ENCODE measurements at regions of chr1 and their contacts with region 1.

Region 1: GRCh38 chr1:11907275-11908094 is 18.7 kb downstream of the KIAA2013 start:
- DNase-seq: peak; percentile 94
- ATAC-seq: peak; percentile 47
- H3K4me3 Mint-ChIP-seq: peak overlapping the region; percentile 81
- H3K27ac Mint-ChIP-seq: peak overlapping the region; percentile 100
- H3K4me1 Mint-ChIP-seq: peaks cover 56% of the 10 kb centered on the region
- H3K27me3 Mint-ChIP-seq: peaks cover 5% of the 10 kb centered on the region

Region 2: DNA sequence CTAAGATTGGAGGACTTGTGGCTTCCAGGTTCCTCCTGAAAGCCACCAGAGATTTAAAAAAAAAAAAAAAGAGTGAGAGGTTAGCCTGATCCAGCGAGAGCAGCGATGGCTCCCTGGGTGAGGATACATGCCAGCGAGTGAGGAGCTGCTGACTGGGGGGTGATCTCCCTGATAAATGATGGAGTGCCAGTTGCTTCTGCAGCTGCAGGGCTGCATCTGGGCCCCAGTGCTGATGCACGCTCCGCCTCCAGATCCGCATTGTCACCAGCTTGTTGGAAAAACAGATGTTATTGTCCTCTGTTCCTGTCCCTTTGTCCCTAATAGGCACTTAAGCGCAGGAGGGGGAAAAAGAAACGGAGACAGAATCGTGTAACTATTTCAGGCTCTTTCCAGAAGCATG is 605.9 kb before region 1 on chr1:
- CTCF ChIA-PET with region 1: no interaction called
- POLR2A ChIA-PET with region 1: no interaction called
- DNase-seq: no peak
- ATAC-seq: no peak
- H3K4me3 Mint-ChIP-seq: no peak overlapping the region
- H3K27ac Mint-ChIP-seq: no peak overlapping the region
- H3K4me1 Mint-ChIP-seq: peaks cover 9% of the 10 kb centered on the region
- H3K27me3 Mint-ChIP-seq: no peaks in the 10 kb centered on the region

Region 3: DNA sequence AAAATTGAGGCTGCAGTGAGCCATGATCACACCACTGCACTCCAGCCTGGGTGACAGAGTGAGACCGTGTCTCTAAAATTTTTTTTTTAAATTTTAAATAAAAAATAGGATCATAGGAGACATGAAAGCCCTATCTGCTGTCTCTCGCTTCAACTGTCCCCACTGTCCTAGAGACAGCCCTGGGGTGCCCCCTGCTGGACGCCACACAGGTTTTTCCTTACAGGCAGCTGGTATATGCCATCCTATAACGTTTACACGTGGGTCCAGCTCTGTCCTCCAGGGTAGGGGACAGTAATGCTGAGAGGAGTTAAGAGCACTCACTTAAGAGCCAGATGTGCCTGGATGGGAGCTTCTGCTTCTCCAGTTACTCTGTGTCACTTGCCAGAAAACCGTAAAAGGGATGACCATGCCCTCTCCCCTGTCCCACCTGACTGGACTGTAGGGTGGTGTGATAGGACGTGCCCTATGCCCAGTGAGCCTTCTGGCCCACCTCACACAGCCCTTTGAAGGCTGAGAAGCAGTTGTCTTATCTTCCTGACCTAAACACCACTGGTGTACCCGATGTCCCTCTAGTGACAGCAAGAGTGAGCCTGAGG is 261.7 kb before region 1 on chr1:
- CTCF ChIA-PET with region 1: no interaction called
- POLR2A ChIA-PET with region 1: interaction called, 14 read pairs
- DNase-seq: peak; percentile 91
- ATAC-seq: peak; percentile 55
- H3K4me3 Mint-ChIP-seq: no peak overlapping the region
- H3K27ac Mint-ChIP-seq: no peak overlapping the region
- H3K4me1 Mint-ChIP-seq: peaks cover 16% of the 10 kb centered on the region
- H3K27me3 Mint-ChIP-seq: peaks cover 2% of the 10 kb centered on the region

Region 4: DNA sequence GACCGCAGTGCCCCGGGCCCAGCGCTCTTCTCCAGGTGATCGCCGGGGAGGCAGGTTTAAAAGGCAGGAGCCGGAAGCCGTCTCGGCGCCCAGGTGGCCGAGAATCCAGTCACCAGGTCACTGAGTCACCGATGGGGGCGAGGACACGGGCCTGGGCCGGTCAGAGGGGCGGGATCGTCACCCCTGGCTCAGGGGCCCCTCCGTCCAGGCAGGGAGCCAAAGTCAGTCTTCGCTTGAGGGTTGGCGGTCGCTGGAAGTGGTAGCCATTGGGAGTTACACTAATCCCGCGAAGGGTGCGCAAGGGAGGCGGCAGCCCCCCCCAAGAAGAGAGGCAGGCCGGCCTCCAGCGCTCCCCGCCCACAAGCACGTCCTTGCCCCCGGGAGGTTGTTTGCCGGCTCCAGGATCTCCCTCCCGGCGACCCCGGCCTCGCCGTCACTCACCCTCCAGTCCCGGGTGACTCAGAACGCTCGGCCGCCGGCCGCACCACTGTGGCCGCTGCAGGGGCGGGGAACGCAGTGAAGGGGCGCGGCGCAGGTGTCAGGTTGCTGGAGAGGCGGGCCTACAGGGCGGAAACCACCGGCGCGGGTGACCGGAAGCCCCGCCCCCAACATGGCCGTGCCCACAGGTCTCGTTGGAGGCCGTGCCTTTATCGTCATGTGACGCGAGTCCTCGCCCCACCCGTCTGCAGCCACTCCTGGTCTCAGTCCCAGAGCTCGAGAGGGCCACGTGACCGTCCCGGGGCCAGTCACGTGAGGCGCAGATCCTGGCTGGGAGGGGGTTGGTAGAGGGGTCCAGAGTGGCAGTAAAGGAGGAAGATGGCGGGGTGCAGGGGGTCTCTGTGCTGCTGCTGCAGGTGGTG is 101.8 kb before region 1 on chr1 and contains the starts of genes CLCN6 and MTHFR:
- CTCF ChIA-PET with region 1: interaction called, 7 read pairs
- POLR2A ChIA-PET with region 1: interaction called, 103 read pairs
- DNase-seq: peak; percentile 99
- ATAC-seq: peak; percentile 88
- H3K4me3 Mint-ChIP-seq: peak within 1 kb of the TSS; percentile 97
- H3K27ac Mint-ChIP-seq: peak within 1 kb of the TSS; percentile 95
- H3K4me1 Mint-ChIP-seq: peaks cover 64% of the 10 kb centered on the region
- H3K27me3 Mint-ChIP-seq: no peaks in the 10 kb centered on the region
- total RNA-seq, gene CLCN6: 19.7 to 20.9 TPM
- total RNA-seq, gene MTHFR: 32.4 to 34.6 TPM

Region 5: DNA sequence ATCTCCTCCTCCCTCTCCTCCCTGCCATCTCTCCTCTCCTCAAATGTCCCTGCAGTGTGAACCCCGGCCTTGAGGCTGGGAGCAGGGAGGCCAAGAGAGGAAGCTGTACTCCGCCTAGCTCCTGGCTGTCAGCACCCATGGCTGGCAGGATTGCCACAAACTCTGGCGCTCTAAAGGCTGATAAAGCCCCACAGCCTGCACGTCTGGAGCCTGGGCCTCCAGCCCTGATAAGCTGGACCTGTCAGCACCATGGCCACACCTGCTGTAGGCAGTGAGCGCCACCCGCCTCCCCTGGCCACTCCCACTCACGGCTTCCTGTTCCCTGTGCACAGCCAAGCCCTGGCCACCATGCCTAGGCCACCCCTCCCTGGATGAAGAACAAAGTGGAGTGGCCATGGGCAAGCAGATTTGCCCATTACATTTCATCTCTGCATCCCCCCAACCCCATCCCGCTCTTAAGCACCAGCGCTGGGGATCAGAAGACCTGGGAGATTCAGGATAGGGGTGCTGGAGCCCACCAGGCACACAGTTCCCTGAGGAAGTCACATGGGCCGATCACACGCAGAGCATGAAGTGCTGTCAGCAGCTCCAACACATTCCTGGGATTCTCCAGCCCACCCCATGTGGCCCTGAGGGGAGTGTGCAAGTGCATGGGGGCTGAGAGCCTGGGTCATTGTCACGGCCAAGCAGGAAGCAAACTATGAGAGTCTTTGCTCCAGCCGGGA is 24.5 kb before region 1 on chr1:
- CTCF ChIA-PET with region 1: no interaction called
- POLR2A ChIA-PET with region 1: interaction called, 16 read pairs
- DNase-seq: peak; percentile 30
- ATAC-seq: peak; percentile 61
- H3K4me3 Mint-ChIP-seq: no peak overlapping the region
- H3K27ac Mint-ChIP-seq: no peak overlapping the region
- H3K4me1 Mint-ChIP-seq: peaks cover 5% of the 10 kb centered on the region
- H3K27me3 Mint-ChIP-seq: peaks cover 4% of the 10 kb centered on the region

Region 6: GRCh38 chr1:11967028-11967547 is 59.6 kb after region 1 on chr1:
- CTCF ChIA-PET with region 1: no interaction called
- POLR2A ChIA-PET with region 1: interaction called, 138 read pairs
- DNase-seq: peak; percentile 27
- ATAC-seq: no peak
- H3K4me3 Mint-ChIP-seq: no peak overlapping the region
- H3K27ac Mint-ChIP-seq: no peak overlapping the region
- H3K4me1 Mint-ChIP-seq: peaks cover 7% of the 10 kb centered on the region
- H3K27me3 Mint-ChIP-seq: no peaks in the 10 kb centered on the region

Region 7: DNA sequence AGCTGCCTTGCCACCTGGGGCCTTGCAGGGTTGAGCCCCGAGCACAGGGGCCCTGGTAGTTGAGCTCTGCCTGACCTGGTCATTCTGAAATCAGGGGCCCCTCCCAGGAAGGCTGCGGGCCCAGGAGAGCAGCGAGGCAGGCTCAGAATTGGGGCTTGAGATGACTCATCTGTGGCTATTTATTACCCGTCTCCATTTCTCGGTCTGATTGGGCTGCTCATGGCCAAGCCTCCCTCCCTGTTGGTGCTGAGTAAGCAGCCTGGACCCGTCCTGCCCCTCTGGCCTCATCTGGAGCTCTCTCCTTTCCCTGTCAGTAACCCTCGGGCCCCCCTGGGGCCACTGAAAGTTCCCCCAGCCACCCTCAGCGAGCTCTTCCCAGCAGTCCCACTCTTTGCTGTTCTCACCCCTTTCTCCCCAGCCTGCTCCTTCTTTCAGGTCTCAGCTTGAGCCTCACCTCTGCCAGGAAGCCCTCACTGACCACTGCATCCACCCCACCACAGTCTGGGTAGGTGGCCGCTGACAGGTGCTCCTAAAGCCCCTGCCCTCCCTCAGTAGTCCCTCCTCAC is 144.6 kb after region 1 on chr1:
- CTCF ChIA-PET with region 1: no interaction called
- POLR2A ChIA-PET with region 1: interaction called, 45 read pairs
- DNase-seq: peak; percentile 57
- ATAC-seq: peak; percentile 38
- H3K4me3 Mint-ChIP-seq: no peak overlapping the region
- H3K27ac Mint-ChIP-seq: peak overlapping the region; percentile 6
- H3K4me1 Mint-ChIP-seq: peaks cover 32% of the 10 kb centered on the region
- H3K27me3 Mint-ChIP-seq: peaks cover 11% of the 10 kb centered on the region

Region 8: DNA sequence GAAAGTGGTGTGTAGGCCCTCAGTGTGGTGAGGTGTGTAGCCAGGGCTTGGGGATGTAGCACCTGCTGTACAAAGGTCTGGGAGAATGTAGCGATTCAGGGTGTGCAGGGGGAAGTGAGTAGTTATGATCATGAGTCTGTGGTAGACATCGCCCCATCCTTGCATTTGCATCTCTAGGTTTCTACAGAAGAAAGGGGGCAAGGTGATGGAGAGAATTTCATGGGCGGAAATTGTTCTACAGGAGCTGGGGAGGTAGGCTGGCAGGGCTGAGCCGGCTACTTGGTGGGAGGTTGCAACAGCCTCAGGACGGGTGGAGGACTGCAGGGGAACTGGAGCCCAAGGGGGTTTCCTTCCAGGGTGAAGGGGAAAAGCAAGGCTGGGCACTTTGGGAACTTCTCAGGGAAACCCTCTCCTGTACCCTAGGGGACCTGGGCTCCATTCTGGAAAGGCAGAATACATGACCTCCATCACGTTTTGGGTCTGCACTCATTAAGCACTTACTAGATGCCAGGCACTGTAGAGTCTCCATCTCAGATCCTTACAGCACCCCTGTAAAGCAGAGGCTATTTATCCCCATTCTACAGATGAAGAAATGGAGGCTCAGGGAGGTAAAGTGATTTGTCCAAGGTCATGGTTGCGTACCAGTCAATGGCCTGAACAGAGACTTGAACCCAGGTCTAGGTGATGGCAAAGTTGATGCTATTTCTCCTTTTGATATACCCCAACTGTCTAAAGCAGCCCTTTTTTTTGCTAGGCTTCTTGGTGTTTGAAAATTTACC is 244.8 kb after region 1 on chr1:
- CTCF ChIA-PET with region 1: no interaction called
- POLR2A ChIA-PET with region 1: interaction called, 11 read pairs
- DNase-seq: no peak
- ATAC-seq: no peak
- H3K4me3 Mint-ChIP-seq: peak overlapping the region; percentile 6
- H3K27ac Mint-ChIP-seq: peak overlapping the region; percentile 95
- H3K4me1 Mint-ChIP-seq: peaks cover 94% of the 10 kb centered on the region
- H3K27me3 Mint-ChIP-seq: no peaks in the 10 kb centered on the region

Measured in activated CD8-positive, alpha-beta T cell treated with anti-CD3 and anti-CD28 coated beads, Interleukin-2, amount 10 ng/mL, durations not matched to agents 7 days and 5 days (primary cell).